ENCODE measurements at regions of chr7 and their contacts with region 1.

Region 1: GRCh38 chr7:56063882-56064625 is at the start of gene SUMF2:
- DNase-seq: peak; percentile 91
- ATAC-seq: peak; percentile 92
- H3K4me3 Mint-ChIP-seq: peak within 1 kb of the TSS; percentile 92
- H3K27ac Mint-ChIP-seq: peak within 1 kb of the TSS; percentile 85
- H3K4me1 Mint-ChIP-seq: peaks cover 32% of the 10 kb centered on the region
- H3K27me3 Mint-ChIP-seq: no peaks in the 10 kb centered on the region
- CTCF ChIP-seq: no peak
- total RNA-seq, gene SUMF2: 91.1 and 103 TPM in 2 replicates

Region 2: DNA sequence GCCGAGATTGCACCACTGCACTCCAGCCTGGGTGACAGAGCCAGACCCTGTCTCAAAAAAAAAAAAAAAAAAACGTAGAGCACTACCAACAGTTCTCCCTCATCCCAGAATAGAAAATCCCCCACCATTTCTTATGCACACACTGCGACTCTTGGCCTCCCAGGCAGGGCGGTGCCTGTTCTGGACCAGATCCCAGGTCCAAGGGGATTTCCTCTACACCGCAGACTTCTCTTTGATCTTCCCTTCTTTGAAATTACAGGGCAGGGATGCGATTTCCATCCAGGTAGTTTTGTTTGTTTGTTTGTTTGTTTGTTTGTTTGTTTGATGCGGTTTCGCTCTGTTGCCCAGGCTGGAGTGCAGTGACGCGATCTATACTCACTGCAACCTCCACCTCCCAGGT is 293.3 kb before region 1 on chr7:
- CTCF ChIA-PET with region 1: no interaction called
- POLR2A ChIA-PET with region 1: interaction called, 13 read pairs
- intact Hi-C with region 1: no loop called
- DNase-seq: no peak
- ATAC-seq: no peak
- H3K4me3 Mint-ChIP-seq: no peak overlapping the region
- H3K27ac Mint-ChIP-seq: no peak overlapping the region
- H3K4me1 Mint-ChIP-seq: no peaks in the 10 kb centered on the region
- H3K27me3 Mint-ChIP-seq: no peaks in the 10 kb centered on the region
- CTCF ChIP-seq: no peak

Region 3: GRCh38 chr7:56033671-56034432 is 30.2 kb before region 1 on chr7:
- CTCF ChIA-PET with region 1: no interaction called
- POLR2A ChIA-PET with region 1: interaction called, 5 read pairs
- intact Hi-C with region 1: loop called (anchors 1 kb)
- DNase-seq: peak; percentile 66
- ATAC-seq: peak; percentile 98
- H3K4me3 Mint-ChIP-seq: peak overlapping the region; percentile 84
- H3K27ac Mint-ChIP-seq: peak overlapping the region; percentile 68
- H3K4me1 Mint-ChIP-seq: peaks cover 4% of the 10 kb centered on the region
- H3K27me3 Mint-ChIP-seq: no peaks in the 10 kb centered on the region
- CTCF ChIP-seq: no peak